Adrenal gland (tissue), 19 donors: ENCODE measurements at regions of chr6 and their contacts with region 1.

Region 1: GRCh38 chr6:143842902-143843676 is at the start of gene LTV1:
- DNase-seq: peak; percentile 96 to 99 (median 98)
- H3K4me3 ChIP-seq: peak within 1 kb of the TSS; percentile 51 to 83 (median 61)
- H3K27ac ChIP-seq: peak within 1 kb of the TSS; percentile 71 to 93 (median 88)
- H3K4me1 ChIP-seq: peaks cover 12 to 23% of the 10 kb centered on the region in 2 donors
- H3K27me3 ChIP-seq: no peaks in the 10 kb centered on the region
- CTCF ChIP-seq: peak in 2 of 6 experiments; percentile 1 to 3
- POLR2A ChIP-seq: peak; percentile 34 to 69
- total RNA-seq, gene LTV1: 6.1 to 40.0 (median 16.3) TPM

Region 2: DNA sequence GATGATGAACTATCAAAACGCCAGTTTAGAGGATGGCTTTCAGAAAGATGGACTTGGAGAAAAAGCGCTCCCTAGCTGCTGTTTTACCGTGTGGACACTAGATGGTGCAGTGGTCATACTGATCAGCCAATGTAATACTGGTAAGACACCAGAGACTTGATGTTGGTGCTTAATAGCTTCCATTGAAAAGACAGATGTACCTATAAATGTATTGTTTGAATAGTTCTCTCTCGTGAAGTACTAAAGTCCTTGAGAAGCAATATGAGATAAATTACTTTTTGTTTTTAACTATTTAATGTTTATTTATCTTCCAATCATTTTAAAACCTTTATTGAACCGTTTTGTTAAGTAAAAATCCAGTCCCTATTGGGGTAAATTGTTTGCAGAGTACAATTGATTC is 267.6 kb before region 1 on chr6:
- intact Hi-C with region 1: loop called in 1 of 2 experiments (anchors 10 kb)
- DNase-seq: peak; percentile 49 to 86 (median 65)
- H3K4me3 ChIP-seq: no peak overlapping the region
- H3K27ac ChIP-seq: no peak overlapping the region
- H3K4me1 ChIP-seq: peaks cover 7 to 11% of the 10 kb centered on the region in 2 donors
- H3K27me3 ChIP-seq: no peaks in the 10 kb centered on the region
- CTCF ChIP-seq: peak; percentile 81 to 96 (median 95)
- POLR2A ChIP-seq: no peak

Region 3: GRCh38 chr6:143792402-143793279 is 50.4 kb before region 1 on chr6:
- intact Hi-C with region 1: no loop called
- DNase-seq: no peak
- H3K4me3 ChIP-seq: no peak overlapping the region
- H3K27ac ChIP-seq: no peak overlapping the region
- H3K4me1 ChIP-seq: no peaks in the 10 kb centered on the region
- H3K27me3 ChIP-seq: no peaks in the 10 kb centered on the region
- CTCF ChIP-seq: no peak
- POLR2A ChIP-seq: no peak